ENCODE measurements at regions of chr11 and their contacts with region 1.

Region 1: DNA sequence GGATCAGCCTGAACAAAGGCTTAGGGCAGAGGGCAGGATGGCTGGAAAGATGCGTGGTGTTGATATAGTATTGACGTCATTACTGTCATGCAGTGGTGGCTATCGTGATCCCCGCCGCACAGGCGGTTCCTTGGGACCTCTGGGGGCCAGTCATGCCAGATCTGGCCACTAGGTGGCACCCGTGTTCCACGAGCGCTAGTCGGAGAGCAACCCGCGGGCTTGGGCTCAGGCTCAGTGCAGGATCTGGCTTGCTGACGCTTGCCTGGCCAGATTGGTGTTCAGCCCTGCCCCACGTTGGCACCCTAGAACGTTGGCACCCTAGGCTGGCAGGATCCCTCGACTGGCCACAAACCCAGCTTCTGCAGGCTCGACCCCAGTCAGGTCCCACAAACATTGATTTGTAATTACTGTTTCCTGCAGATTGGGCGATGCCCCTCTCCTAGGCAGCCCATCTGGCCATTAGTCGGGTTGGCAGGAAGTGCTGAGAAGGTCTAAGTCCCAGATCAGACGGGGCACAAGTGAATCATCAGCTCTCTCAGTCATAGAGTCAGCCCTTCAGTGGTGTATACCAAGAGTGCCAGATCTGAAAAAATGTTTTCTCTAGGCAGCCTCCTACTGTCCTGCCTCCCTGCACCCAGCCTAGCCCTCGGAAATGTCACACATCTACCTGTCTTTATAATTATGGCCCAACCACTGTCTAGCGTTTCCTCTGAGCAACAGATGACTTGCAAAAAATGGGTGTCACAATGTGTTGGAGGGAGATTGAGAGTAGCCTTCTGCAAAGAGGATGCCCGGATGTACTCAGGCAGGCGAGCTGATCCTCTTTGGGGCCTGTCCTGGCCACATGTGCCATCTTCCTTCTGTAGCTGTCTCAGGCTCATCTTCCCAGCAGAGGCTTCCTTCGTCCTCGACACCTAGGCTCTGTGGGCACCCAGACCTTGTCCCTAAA is 315.3 kb downstream of the TMEM135 start:
- DNase-seq: peak; percentile 96
- ATAC-seq: peak; percentile 87
- H3K4me3 ChIP-seq: peak overlapping the region; percentile 52
- H3K27ac ChIP-seq: peak overlapping the region; percentile 16; the same call in 1 of the 2 replicates
- H3K4me1 ChIP-seq: peaks cover 29% of the 10 kb centered on the region
- H3K27me3 ChIP-seq: no peaks in the 10 kb centered on the region
- CTCF ChIP-seq: peak; percentile 99

Region 2: GRCh38 chr11:85647604-85648299 is 1705.3 kb before region 1 on chr11 and contains the start of gene TMEM126A:
- CTCF ChIA-PET with region 1: no interaction called
- POLR2A ChIA-PET with region 1: no interaction called
- intact Hi-C with region 1: no loop called
- DNase-seq: peak; percentile 98
- ATAC-seq: peak; percentile 91
- H3K4me3 ChIP-seq: peak within 1 kb of the TSS; percentile 76
- H3K27ac ChIP-seq: peak within 1 kb of the TSS; percentile 79
- H3K4me1 ChIP-seq: peaks cover 25% of the 10 kb centered on the region
- H3K27me3 ChIP-seq: no peaks in the 10 kb centered on the region
- CTCF ChIP-seq: no peak
- total RNA-seq, gene TMEM126A: 34.0 and 37.8 TPM in 2 replicates

Region 3: DNA sequence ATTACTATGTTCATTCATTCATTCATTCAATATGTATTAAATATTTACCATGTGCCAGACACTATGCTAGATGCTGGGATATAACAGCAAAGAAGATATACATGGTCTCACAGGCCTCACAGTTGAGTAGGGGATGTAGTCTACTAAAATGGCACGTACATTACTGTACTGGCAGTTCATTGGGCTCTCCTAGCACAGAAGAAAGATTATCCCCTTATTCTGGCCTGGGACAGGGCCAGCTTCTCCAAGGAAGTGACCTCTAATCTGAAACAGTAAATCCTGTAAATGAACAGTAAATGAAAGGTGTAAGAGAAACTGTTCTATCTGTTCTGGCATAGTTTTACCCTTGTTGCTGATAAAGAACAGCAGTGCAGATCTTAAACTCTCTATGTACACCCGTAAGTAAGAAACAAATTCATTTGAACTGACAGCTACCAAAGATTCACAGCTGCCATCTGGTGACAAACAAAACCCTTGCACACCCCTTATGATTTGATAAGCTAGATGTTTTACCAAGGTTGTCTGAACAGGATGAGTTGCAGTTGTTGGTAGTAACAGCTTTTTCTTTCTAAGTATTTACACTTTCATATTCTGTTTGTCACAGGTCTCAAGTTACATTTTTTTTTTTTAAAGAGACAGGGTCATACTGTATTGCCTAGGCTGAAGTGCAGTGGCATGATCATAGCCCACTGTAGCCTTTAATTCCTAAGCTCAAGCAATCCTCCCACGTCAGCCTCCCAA is 52.2 kb before region 1 on chr11:
- CTCF ChIA-PET with region 1: no interaction called
- POLR2A ChIA-PET with region 1: no interaction called
- intact Hi-C with region 1: no loop called
- DNase-seq: peak; percentile 15
- ATAC-seq: peak; percentile 84
- H3K4me3 ChIP-seq: no peak overlapping the region
- H3K27ac ChIP-seq: no peak overlapping the region
- H3K4me1 ChIP-seq: peaks cover 5% of the 10 kb centered on the region
- H3K27me3 ChIP-seq: no peaks in the 10 kb centered on the region
- CTCF ChIP-seq: 0 out of 2 replicates have a peak, but pooled peaks have one; percentile 11

Region 4: DNA sequence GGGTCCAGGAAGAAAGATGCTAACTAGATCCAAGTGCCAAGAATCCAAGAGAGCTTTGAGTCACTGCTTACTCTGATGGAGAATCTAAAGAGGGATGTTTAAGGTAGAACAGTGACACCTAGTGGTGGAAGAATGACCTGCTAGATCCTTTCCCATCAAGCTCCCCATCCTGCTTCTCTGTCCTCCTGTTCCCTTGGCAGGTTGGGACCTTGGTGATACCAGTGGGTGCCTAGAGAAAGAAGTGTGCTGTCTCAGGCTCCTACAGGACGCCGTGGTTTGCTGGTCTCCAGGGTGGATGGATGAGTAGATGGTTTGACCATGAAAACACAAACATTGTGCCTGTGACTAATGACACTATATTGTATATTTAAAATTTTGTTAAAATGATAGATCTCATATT is 68.4 kb after region 1 on chr11:
- CTCF ChIA-PET with region 1: interaction called, 8 read pairs
- POLR2A ChIA-PET with region 1: interaction called, 4 read pairs
- intact Hi-C with region 1: loop called (anchors 1 kb)
- DNase-seq: peak; percentile 97
- ATAC-seq: peak; percentile 57
- H3K4me3 ChIP-seq: no peak overlapping the region
- H3K27ac ChIP-seq: peak overlapping the region; percentile 93
- H3K4me1 ChIP-seq: peaks cover 65% of the 10 kb centered on the region
- H3K27me3 ChIP-seq: no peaks in the 10 kb centered on the region
- CTCF ChIP-seq: peak; percentile 89

Region 5: GRCh38 chr11:87463486-87464102 is 110.6 kb after region 1 on chr11:
- CTCF ChIA-PET with region 1: interaction called, 4 read pairs
- POLR2A ChIA-PET with region 1: no interaction called
- intact Hi-C with region 1: loop called (anchors 5 kb)
- DNase-seq: peak; percentile 84
- ATAC-seq: peak; percentile 93
- H3K4me3 ChIP-seq: no peak overlapping the region
- H3K27ac ChIP-seq: no peak overlapping the region
- H3K4me1 ChIP-seq: no peaks in the 10 kb centered on the region
- H3K27me3 ChIP-seq: no peaks in the 10 kb centered on the region
- CTCF ChIP-seq: peak; percentile 86

Region 6: DNA sequence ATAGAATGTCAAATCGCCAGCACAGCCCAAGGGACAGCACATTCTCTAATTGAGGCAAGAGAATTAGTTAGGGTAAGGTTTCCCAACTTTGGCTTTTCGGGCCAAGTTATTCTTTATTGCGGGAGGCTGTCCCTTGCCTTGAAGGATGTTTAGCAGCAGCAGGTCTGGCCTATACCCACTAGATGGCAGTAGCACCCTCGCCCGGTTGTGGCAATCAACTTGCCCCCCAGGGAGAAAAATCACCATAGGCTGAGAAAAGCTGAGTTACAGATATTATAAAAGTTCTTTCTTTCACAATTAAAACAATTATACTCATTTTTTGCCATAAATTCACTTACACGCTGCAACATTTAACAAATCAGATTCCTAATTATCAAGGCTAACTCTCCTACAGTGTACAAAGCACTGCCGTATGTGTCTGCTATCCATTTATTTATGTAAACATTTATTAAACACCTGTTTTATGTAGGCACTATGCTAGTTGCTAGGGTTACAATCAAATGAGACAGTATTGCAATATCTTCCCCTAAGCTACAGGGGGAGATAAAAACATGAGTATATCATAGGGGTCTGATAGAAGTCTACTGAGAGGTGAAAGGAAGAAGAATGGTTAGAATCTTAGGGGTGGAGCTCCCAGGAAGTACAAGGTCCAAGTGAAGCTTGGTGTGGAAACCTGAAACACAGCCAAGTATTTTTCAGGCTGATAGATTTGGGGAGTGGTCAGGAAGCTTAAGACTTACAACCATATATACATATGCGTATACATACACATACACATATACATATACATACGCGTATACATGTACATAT is 369.9 kb after region 1 on chr11:
- CTCF ChIA-PET with region 1: no interaction called
- POLR2A ChIA-PET with region 1: no interaction called
- intact Hi-C with region 1: loop called (anchors 2 kb)
- DNase-seq: peak; percentile 64
- ATAC-seq: peak; percentile 72
- H3K4me3 ChIP-seq: 0 out of 2 replicates have a peak overlapping the region, but pooled peaks have one; percentile 8
- H3K27ac ChIP-seq: no peak overlapping the region
- H3K4me1 ChIP-seq: peaks cover 11% of the 10 kb centered on the region
- H3K27me3 ChIP-seq: no peaks in the 10 kb centered on the region
- CTCF ChIP-seq: peak; percentile 94

Region 7: DNA sequence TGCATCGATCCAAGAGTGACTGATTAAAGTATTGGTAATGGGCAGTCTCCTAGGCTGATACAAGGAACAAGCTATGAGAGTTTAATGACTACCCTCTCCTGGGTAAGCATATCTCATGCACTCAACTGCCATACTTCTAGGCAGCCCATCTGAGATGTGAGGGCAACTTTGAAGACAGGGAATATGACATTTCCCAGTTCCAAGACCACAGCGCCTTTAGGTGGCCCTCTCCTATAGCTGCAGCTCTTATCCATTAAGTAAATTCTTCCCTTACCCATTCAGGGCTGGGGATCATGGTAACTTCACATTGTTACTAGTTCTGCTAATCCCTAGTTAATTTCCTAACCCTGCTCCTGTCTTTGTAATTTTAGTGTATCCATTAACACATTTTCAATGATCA is 1141.8 kb after region 1 on chr11:
- CTCF ChIA-PET with region 1: no interaction called
- POLR2A ChIA-PET with region 1: no interaction called
- intact Hi-C with region 1: loop called (anchors 10 kb)
- DNase-seq: peak; percentile 27
- ATAC-seq: no peak
- H3K4me3 ChIP-seq: no peak overlapping the region
- H3K27ac ChIP-seq: no peak overlapping the region
- H3K4me1 ChIP-seq: no peaks in the 10 kb centered on the region
- H3K27me3 ChIP-seq: no peaks in the 10 kb centered on the region
- CTCF ChIP-seq: peak; percentile 44

Region 8: GRCh38 chr11:88886796-88887195 is 1533.8 kb after region 1 on chr11:
- CTCF ChIA-PET with region 1: no interaction called
- POLR2A ChIA-PET with region 1: no interaction called
- intact Hi-C with region 1: loop called (anchors 10 kb)
- DNase-seq: peak; percentile 94
- ATAC-seq: peak; percentile 99
- H3K4me3 ChIP-seq: no peak overlapping the region
- H3K27ac ChIP-seq: no peak overlapping the region
- H3K4me1 ChIP-seq: no peaks in the 10 kb centered on the region
- H3K27me3 ChIP-seq: no peaks in the 10 kb centered on the region
- CTCF ChIP-seq: peak; percentile 87

Measured in PC-3 (cell line).